ENCODE measurements at regions of chr22 and their contacts with region 1.

Region 1: GRCh38 chr22:49880281-49880680 is 26.6 kb downstream of the ZBED4 start:
- DNase-seq: peak; percentile 53
- ATAC-seq: peak; percentile 89
- H3K4me3 ChIP-seq: peak overlapping the region; percentile 53
- H3K27ac ChIP-seq: peak overlapping the region; percentile 63
- H3K4me1 ChIP-seq: peaks cover 28% of the 10 kb centered on the region
- H3K27me3 ChIP-seq: no peaks in the 10 kb centered on the region
- CTCF ChIP-seq: no peak
- EP300 ChIP-seq: no peak
- POLR2A ChIP-seq: peak; percentile 57; the same call in 1 of the 2 replicates
- RAD21 ChIP-seq: no peak

Region 2: DNA sequence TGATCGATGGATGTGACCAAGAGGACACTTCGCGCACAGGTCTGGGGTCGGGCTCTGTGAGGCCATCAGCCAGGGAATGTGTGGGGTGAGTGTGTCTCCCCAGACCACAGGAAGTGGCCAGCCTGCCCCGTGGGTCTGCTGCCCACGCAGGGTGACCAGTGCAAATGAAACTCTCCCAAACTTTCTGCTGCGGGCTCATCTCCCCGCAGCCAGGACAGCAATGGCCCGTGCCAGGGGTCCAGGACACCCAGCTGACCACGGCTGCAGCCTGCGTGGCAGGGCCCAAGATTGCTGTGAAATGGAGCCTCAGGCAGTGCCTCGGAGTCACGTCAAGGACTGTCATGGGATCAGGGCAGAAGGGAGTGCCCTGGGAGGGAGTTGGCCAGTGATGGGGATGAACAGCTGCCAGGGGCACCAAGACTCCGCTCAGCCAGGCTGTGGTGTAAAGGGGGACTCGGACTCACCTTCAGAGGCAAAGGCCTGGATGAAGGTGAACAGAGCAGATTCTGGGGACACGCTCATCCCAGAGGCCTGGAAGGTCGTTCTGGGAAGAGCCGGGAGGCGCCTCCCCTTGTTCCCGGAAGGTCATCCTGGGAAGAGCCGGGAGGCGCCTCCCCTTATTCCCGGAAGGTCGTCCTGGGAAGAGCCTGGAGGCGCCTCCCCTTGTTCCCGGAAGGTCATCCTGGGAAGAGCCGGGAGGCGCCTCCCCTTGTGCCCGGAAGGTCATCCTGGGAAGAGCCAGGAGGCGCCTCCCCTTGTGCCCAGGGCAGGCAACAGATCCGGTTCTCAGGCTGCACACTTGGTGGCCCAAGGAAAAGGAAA is 305.2 kb before region 1 on chr22:
- CTCF ChIA-PET with region 1: no interaction called
- POLR2A ChIA-PET with region 1: no interaction called
- RAD21 ChIA-PET with region 1: no interaction called
- SMC1A ChIA-PET with region 1: no interaction called
- in situ Hi-C with region 1: no loop called
- intact Hi-C with region 1: no loop called
- DNase-seq: no peak
- ATAC-seq: no peak
- H3K4me3 ChIP-seq: no peak overlapping the region
- H3K27ac ChIP-seq: no peak overlapping the region
- H3K4me1 ChIP-seq: no peaks in the 10 kb centered on the region
- H3K27me3 ChIP-seq: no peaks in the 10 kb centered on the region
- CTCF ChIP-seq: no peak
- EP300 ChIP-seq: no peak
- POLR2A ChIP-seq: no peak
- RAD21 ChIP-seq: no peak

Region 3: GRCh38 chr22:49827853-49828598 is 52.3 kb before region 1 on chr22 and contains the start of gene BRD1:
- CTCF ChIA-PET with region 1: no interaction called
- POLR2A ChIA-PET with region 1: interaction called, 4 read pairs
- RAD21 ChIA-PET with region 1: interaction called, 7 read pairs
- SMC1A ChIA-PET with region 1: interaction called, 5 read pairs
- in situ Hi-C with region 1: no loop called
- intact Hi-C with region 1: loop called (anchors 1 kb)
- DNase-seq: no peak
- ATAC-seq: peak; percentile 59
- H3K4me3 ChIP-seq: peak within 1 kb of the TSS; percentile 89
- H3K27ac ChIP-seq: peak within 1 kb of the TSS; percentile 78
- H3K4me1 ChIP-seq: peaks cover 35% of the 10 kb centered on the region
- H3K27me3 ChIP-seq: no peaks in the 10 kb centered on the region
- CTCF ChIP-seq: no peak
- EP300 ChIP-seq: no peak
- POLR2A ChIP-seq: no peak; the same call in 1 of the 2 replicates
- RAD21 ChIP-seq: no peak
- polyA plus RNA-seq, gene BRD1: 0.90 to 2.1 TPM

Region 4: GRCh38 chr22:49853981-49854831 is 26.1 kb before region 1 on chr22:
- CTCF ChIA-PET with region 1: interaction called, 3 read pairs
- POLR2A ChIA-PET with region 1: interaction called, 13 read pairs
- RAD21 ChIA-PET with region 1: interaction called, 8 read pairs
- SMC1A ChIA-PET with region 1: interaction called, 22 read pairs
- in situ Hi-C with region 1: no loop called
- intact Hi-C with region 1: loop called (anchors 2 kb)
- DNase-seq: no peak
- ATAC-seq: peak; percentile 1; the same call in 1 of the 3 replicates
- H3K4me3 ChIP-seq: peak overlapping the region; percentile 97
- H3K27ac ChIP-seq: peak overlapping the region; percentile 65
- H3K4me1 ChIP-seq: peaks cover 8% of the 10 kb centered on the region
- H3K27me3 ChIP-seq: peaks cover 4 to 6% of the 10 kb centered on the region in 2 experiments
- CTCF ChIP-seq: no peak
- EP300 ChIP-seq: no peak
- POLR2A ChIP-seq: no peak; the same call in 1 of the 2 replicates
- RAD21 ChIP-seq: no peak

Region 5: DNA sequence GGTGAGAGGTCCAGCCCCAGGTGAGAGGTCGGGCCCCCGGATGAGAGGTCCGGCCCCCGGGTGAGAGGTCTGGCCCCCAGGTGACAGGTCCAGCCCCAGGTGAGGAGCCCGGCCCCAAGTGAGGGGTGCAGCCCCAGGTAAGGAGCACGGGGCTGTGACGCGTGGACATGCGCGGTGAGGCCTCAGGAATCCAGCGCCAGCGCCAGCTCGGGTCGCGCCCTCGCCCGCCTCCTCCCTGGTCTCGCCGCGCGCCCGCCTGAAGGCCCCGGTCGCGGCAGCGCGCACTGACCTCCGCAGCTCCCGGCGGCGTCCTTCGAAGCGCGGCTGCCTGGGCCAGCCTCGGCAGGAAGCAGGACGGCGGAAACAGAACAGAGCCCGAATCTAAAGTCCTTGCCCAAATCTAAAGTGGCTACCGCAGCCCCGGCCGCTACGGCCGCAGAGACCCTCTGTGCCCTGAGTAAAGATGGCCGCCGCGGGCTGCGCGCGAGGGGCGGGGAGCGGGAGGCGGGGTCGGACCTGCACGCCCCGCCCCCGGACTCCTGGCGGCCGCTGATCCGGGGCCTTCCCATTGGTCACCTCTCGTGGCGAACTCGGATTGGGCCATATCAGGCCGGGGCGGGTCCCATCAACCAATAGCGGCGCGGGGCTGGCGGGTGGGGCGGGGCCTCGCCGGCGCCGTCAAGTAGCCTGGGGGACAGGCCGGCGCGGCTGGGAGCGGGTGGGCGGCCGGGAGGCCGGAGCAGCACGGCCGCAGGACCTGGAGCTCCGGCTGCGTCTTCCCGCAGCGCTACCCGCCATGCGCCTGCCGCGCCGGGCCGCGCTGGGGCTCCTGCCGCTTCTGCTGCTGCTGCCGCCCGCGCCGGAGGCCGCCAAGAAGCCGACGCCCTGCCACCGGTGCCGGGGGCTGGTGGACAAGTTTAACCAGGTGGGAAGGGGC is 38.0 kb after region 1 on chr22 and contains the starts of genes ALG12 and CRELD2:
- CTCF ChIA-PET with region 1: no interaction called
- POLR2A ChIA-PET with region 1: no interaction called
- RAD21 ChIA-PET with region 1: interaction called, 6 read pairs
- SMC1A ChIA-PET with region 1: interaction called, 8 read pairs
- in situ Hi-C with region 1: no loop called
- intact Hi-C with region 1: loop called (anchors 2 kb)
- DNase-seq: peak; percentile 70
- ATAC-seq: peak; percentile 98
- H3K4me3 ChIP-seq: peak within 1 kb of the TSS; percentile 92
- H3K27ac ChIP-seq: peak within 1 kb of the TSS; percentile 89
- H3K4me1 ChIP-seq: peaks cover 19% of the 10 kb centered on the region
- H3K27me3 ChIP-seq: no peaks in the 10 kb centered on the region
- CTCF ChIP-seq: no peak
- EP300 ChIP-seq: no peak
- POLR2A ChIP-seq: peak; percentile 76
- RAD21 ChIP-seq: no peak
- polyA plus RNA-seq, gene ALG12: 0.22 to 0.37 TPM
- polyA plus RNA-seq, gene CRELD2: 9.4 to 15.0 TPM

Region 6: GRCh38 chr22:50012716-50013181 is 132.5 kb after region 1 on chr22 and contains the start of gene IL17REL:
- CTCF ChIA-PET with region 1: no interaction called
- POLR2A ChIA-PET with region 1: no interaction called
- RAD21 ChIA-PET with region 1: no interaction called
- SMC1A ChIA-PET with region 1: no interaction called
- in situ Hi-C with region 1: no loop called
- intact Hi-C with region 1: no loop called
- DNase-seq: no peak
- ATAC-seq: no peak
- H3K4me3 ChIP-seq: no peak within 1 kb of the TSS
- H3K27ac ChIP-seq: no peak within 1 kb of the TSS; the same call in 1 of the 2 replicates
- H3K4me1 ChIP-seq: peaks cover 33% of the 10 kb centered on the region
- H3K27me3 ChIP-seq: no peaks in the 10 kb centered on the region; a peak in 1 of 4 replicates
- CTCF ChIP-seq: no peak
- EP300 ChIP-seq: no peak
- POLR2A ChIP-seq: no peak
- RAD21 ChIP-seq: no peak
- polyA plus RNA-seq, gene IL17REL: not detected